GM10248 (cell line): ENCODE measurements at regions of chr19 and their contacts with region 1.

Region 1: DNA sequence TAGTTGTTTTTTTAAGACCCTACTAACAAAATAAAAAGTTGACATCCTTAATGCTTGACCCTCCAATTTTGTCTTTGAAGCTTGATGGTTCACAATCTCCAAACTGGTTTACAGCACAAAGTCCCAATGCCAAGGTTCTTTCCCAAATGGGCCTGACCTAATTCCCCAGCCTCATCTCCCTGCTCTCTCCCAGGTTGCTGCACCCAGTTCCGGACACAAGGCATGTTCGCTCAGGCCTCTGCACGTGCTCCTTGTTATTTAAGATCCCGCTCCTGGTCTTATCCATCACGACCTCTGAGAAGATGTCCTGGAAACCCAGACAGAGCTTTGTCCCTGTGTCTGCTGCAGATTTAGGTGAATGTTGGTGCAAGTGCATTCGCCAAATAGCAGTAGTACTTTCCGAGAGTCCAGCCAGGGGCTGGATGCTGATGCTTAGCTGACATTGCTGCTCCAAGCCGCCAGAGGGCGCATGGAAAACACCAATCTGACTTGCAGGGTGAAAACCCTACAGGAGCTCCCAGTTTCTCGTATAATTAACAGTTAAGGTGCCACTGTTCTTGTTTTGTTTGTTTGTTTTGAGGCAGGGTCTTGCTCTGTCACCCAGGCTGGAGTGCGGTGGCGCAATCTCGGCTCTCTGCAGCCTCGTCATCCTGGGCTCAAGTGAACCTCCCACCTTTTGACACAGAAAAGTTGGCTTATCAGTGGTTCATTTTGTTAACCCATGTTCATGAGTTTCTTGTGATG is 18.5 kb downstream of the LYPD3 start:
- DNase-seq: peak; percentile 81
- CTCF ChIP-seq: peak; percentile 90

Region 2: GRCh38 chr19:43433358-43433673 is 13.6 kb before region 1 on chr19:
- CTCF ChIA-PET with region 1: interaction called, 71 read pairs
- POLR2A ChIA-PET with region 1: no interaction called
- DNase-seq: no peak
- CTCF ChIP-seq: no peak

Region 3: DNA sequence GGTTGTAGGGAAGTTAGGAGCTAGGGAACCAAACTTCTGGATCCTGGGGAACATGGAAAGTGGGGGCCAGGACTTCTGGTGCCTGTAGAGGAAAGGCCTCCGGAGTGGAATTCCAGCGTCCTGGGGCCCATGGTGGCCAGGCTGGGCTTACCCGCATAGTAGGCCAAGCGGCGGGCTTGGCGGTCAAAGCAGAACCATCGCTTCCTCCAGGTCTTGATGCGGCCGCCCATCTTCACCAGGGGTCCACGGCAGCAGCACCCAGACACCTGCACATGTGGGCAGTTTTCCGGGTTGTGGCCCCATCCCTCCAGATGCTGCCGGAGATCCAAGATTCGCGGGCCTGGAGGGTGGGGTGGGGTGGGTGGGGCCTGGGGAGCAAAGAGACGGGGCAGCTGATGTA is 32.3 kb after region 1 on chr19:
- CTCF ChIA-PET with region 1: interaction called, 12 read pairs
- POLR2A ChIA-PET with region 1: no interaction called
- DNase-seq: no peak
- CTCF ChIP-seq: no peak

Region 4: DNA sequence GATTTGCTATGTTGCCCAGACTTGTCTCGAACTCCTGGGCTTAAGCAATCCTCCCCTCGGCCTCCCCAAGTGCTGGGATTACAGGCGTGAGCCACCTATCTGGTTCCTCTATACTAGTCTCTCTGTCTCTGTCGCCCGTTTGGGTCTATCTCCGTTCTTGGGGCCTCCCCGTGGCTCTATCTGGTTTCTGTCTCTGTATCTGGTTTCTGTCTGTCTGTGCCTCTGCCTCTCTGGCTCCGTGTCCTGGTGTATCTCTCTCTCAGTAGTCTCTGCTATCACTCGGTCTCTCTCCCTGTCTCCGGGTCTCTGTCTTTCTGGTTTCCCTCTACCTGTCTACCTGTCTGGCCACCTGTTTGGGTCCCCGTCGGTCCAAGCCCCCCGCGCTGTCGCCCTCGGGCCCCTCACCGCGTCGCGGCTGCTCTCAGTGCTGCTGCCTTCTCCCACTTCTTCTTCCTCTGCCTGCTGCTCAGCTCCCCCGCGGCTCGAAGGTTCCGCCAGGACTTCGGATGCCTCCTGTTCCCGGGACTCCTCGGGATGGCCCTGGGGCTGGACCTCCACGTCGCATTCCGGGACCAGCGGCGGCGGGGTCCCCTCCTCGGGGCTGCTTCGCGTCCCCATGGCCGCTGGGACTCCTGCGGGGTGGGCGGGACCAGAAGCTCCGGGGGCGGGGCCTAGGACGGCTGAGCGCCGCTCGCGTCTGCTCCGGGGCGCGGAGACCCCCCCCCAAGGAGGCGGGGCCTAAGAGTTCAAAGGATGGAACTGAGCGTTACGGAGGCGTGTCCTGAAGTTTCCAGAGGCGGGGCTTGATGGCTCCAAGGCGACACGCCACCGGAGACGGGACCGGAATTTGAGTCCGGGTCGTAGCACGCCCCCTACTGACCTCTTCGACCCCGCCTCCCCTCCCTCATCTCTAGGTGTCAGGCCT is 56.8 kb after region 1 on chr19:
- CTCF ChIA-PET with region 1: interaction called, 18 read pairs
- POLR2A ChIA-PET with region 1: no interaction called
- DNase-seq: peak; percentile 99
- CTCF ChIP-seq: peak; percentile 46

Region 5: DNA sequence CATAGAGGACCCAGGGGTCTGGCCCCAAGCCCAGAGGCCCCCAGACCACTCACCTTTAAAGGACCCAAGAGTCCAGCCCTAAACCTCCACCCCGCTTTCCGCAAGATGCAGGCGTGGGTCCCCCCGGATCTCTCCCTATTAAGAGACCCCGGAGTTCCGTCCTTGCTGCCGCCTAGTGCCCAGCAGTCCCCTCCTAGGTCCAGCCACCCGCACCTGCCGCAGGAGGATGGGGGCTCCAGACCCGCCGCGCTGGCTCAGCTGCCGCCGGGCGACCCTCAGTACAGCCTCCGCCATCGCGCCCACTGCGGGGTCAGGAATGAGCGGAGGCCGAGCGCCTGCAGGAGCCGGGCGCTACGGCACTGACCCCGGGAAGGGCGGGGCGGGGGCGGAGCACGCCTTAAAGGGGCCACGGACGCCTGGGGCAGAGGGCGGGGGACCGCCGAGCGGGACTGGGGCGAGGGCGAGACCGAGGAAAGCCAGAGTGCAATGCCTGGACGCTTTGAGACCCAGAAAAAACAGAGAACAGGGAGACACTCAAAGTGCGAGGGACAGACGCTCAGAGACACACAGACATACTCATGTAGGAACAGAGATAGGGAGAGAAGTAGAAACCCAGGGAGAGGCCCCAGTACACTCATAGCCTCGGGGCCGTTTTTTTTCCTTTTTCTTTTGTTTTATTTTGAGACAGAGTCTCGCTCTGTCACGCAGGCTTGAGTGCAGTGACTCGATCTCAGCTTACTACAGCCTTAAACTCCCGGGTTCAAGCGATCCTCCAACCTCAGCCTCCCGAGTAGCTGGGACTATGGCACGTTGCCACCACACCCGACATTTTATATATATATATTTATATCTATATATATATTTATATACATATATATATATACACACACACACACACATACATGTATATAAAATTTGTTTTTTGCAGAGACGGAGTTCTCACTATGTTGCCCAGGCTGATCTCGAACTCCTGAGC is 80.3 kb after region 1 on chr19 and contains the start of gene ETHE1:
- CTCF ChIA-PET with region 1: interaction called, 340 read pairs
- POLR2A ChIA-PET with region 1: no interaction called
- DNase-seq: peak; percentile 88
- CTCF ChIP-seq: no peak

Region 6: DNA sequence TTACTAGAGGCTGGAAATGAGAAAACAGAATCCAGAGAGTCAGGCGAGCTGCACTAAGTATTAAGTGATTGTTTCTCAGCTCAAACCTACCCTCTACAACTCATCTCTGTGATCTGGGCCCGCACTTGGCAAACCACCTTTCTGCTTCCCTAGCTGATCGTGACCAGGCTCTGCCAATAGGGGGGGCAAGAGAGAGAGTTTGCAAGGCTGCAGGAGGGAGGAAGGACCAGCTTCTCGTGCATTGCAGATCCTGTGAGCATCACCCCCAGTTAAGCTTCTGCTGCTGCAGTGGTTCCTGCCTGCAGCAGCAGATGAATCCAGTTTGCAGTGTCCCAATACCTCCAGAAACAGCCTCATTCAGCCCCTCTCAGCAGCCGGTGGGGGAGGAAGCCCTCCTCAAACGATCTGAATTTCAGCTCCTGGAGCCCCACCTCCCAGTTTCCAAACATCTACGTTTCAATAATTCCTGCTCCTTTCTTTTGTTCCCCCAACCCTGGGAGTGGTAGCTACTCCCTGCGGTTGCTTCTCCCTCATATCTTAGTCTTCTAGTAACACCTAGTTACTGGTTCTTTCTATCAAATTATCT is 108.4 kb after region 1 on chr19:
- CTCF ChIA-PET with region 1: interaction called, 12 read pairs
- POLR2A ChIA-PET with region 1: no interaction called
- DNase-seq: peak; percentile 80
- CTCF ChIP-seq: peak; percentile 88